ENCODE measurements at regions of chr1 and their contacts with region 1.

Region 1: GRCh38 chr1:174017231-174017970 is 4.8 kb downstream of the RC3H1 start:
- DNase-seq: no peak
- ATAC-seq: no peak
- H3K4me3 ChIP-seq: no peak overlapping the region
- H3K4me3 Mint-ChIP-seq: peak overlapping the region in 2 of 3 donors; percentile 17 to 28
- H3K27ac ChIP-seq: no peak overlapping the region
- H3K27ac Mint-ChIP-seq: no peak overlapping the region
- H3K4me1 ChIP-seq: peaks cover 20 to 34% of the 10 kb centered on the region in 2 experiments
- H3K4me1 Mint-ChIP-seq: peaks cover 54 to 62% (median 59%) of the 10 kb centered on the region in 3 donors
- H3K27me3 ChIP-seq: no peaks in the 10 kb centered on the region
- H3K27me3 Mint-ChIP-seq: no peaks in the 10 kb centered on the region

Region 2: DNA sequence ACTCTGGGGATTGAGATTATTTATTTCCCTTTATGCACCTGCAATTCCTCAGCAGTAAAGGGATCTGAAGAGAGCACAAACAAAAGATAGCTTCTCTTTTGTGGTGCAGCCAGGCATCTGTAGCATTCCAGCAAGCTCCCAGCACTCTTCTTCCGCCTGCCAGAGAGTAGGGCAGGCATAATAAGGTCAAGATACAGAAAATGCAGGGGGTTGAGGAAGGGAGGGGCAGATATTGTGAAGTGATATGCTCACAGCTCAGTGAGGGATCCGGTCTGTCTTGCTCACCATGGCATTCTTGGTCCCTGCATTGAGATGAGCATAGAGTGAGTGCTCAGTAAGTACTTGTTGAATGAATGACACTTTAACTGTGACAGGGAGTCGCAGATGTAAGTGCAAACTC is 1334.6 kb before region 1 on chr1:
- CTCF ChIA-PET with region 1: no interaction called
- POLR2A ChIA-PET with region 1: interaction called in 1 of 2 experiments, 12 read pairs
- DNase-seq: no peak
- ATAC-seq: peak in 1 of 4 experiments; percentile 59
- H3K4me3 ChIP-seq: no peak overlapping the region
- H3K4me3 Mint-ChIP-seq: no peak overlapping the region
- H3K27ac ChIP-seq: no peak overlapping the region
- H3K27ac Mint-ChIP-seq: no peak overlapping the region
- H3K4me1 ChIP-seq: peaks cover 3 to 23% of the 10 kb centered on the region in 2 experiments
- H3K4me1 Mint-ChIP-seq: peaks cover 15 to 44% (median 27%) of the 10 kb centered on the region in 3 donors
- H3K27me3 ChIP-seq: no peaks in the 10 kb centered on the region
- H3K27me3 Mint-ChIP-seq: peaks cover 0 to 4% of the 10 kb centered on the region in 2 donors

Region 3: GRCh38 chr1:173570370-173571007 is 446.9 kb before region 1 on chr1:
- CTCF ChIA-PET with region 1: no interaction called
- POLR2A ChIA-PET with region 1: no interaction called
- DNase-seq: no peak
- ATAC-seq: no peak
- H3K4me3 ChIP-seq: no peak overlapping the region
- H3K4me3 Mint-ChIP-seq: no peak overlapping the region
- H3K27ac ChIP-seq: no peak overlapping the region
- H3K27ac Mint-ChIP-seq: peak overlapping the region in 1 of 2 donors; percentile 12
- H3K4me1 ChIP-seq: no peaks in the 10 kb centered on the region
- H3K4me1 Mint-ChIP-seq: peaks cover 0 to 3% (median 0%) of the 10 kb centered on the region in 3 donors
- H3K27me3 ChIP-seq: no peaks in the 10 kb centered on the region
- H3K27me3 Mint-ChIP-seq: peaks cover 3 to 10% of the 10 kb centered on the region in 2 donors

Region 4: DNA sequence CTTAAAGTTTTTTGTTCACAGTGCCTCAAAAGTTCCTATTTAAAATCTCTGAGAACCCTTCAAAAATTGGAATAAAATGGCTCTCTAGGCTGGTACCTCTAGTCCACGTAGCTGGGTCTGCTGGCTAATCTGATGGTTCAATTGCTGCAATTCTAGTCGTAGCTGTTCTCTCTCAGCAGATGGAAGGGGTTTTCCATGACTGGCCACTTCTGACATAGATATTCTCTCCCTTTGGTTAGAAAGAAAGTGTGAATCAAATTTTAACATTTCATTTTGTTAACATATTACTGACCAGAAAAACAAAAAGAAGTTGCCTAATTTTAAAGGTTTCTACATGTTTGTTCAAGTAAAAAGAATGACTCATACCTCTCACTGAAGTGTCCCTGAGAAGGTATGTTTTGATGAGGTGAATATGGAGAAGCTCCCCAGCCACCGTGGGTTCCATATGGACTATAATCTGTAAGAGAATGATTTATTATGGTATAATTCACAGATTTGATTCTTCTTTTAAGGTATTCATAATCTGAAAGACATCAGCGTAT is 71.0 kb before region 1 on chr1:
- CTCF ChIA-PET with region 1: no interaction called
- POLR2A ChIA-PET with region 1: interaction called in 1 of 2 experiments, 11 read pairs
- DNase-seq: no peak
- ATAC-seq: no peak
- H3K4me3 ChIP-seq: no peak overlapping the region
- H3K4me3 Mint-ChIP-seq: no peak overlapping the region
- H3K27ac ChIP-seq: no peak overlapping the region
- H3K27ac Mint-ChIP-seq: peak overlapping the region; percentile 28 to 58
- H3K4me1 ChIP-seq: no peaks in the 10 kb centered on the region
- H3K4me1 Mint-ChIP-seq: no peaks in the 10 kb centered on the region
- H3K27me3 ChIP-seq: no peaks in the 10 kb centered on the region
- H3K27me3 Mint-ChIP-seq: no peaks in the 10 kb centered on the region

Region 5: GRCh38 chr1:174301295-174302077 is 284.1 kb after region 1 on chr1:
- CTCF ChIA-PET with region 1: no interaction called
- POLR2A ChIA-PET with region 1: no interaction called
- DNase-seq: no peak
- ATAC-seq: no peak
- H3K4me3 ChIP-seq: no peak overlapping the region
- H3K4me3 Mint-ChIP-seq: no peak overlapping the region
- H3K27ac ChIP-seq: no peak overlapping the region
- H3K27ac Mint-ChIP-seq: no peak overlapping the region
- H3K4me1 ChIP-seq: no peaks in the 10 kb centered on the region
- H3K4me1 Mint-ChIP-seq: peaks cover 0 to 5% (median 3%) of the 10 kb centered on the region in 3 donors
- H3K27me3 ChIP-seq: no peaks in the 10 kb centered on the region
- H3K27me3 Mint-ChIP-seq: no peaks in the 10 kb centered on the region

Measured in T-cell (primary cell).